Right ventricle myocardium inferior (tissue), 1 donor: ENCODE measurements at regions of chr4 and their contacts with region 1.

Region 1: DNA sequence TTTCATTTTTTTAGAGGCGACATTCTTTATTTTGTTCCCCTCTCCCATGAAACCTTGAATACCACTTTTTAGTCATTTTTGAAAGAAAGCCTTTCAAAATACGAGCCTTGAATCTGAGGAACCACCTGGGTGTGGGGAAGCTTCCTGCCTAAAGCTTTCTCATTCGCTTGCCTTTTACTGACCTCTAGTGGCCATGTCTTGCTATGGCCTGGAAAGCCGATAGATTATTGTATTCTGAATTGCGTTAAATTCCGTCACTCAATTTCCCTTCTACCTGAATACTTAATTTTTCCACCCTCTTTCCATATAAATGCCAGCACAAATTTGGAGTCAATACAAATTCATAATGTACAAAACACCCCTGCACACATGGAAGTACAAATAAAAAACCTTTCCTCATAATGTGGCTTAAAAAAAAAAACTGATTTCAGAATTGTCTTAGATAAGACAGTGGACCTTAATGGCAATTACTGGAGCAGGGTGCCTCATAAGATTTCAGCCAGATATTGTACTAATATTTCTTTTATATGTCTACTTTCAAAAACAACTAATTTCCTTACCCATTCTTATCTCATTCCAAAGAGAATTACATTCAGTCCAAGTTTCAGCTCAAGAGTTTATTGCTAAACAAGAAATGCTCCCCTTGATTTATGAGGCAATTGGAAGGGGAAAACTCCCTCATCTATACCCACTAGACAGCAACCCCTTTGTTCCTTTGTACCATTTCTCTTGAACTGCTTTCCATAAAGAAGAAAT is 217.9 kb downstream of the CENPC start:
- DNase-seq: no peak
- ATAC-seq: peak; percentile 59

Region 2: GRCh38 chr4:67087897-67088296 is 239.5 kb before region 1 on chr4:
- intact Hi-C with region 1: loop called (anchors 2 kb)
- DNase-seq: no peak
- ATAC-seq: no peak

Region 3: DNA sequence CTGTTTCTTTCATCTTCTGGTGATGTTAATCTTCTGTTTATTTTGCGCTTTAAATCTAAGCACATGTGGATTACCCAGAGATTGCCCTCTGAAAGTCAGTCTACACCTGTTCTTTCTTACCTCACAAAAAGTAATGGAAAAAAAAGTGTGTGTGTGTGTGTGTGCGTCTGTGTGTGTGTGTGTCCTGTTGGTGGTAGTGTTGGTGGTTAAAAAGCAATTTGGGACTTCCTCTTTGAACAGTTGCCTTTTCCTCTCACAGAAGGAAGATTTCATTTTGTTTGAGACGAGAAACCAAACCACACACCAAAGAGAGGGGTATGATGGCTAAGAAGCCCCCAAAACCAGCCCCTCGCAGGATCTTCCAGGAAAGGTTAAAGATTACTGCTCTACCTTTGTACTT is 231.1 kb after region 1 on chr4 and contains the start of gene STAP1:
- intact Hi-C with region 1: no loop called
- DNase-seq: no peak
- ATAC-seq: no peak
- total RNA-seq, gene STAP1: not detected